ENCODE measurements at regions of chr2 and their contacts with region 1.

Region 1: GRCh38 chr2:26503231-26503880 is 25.4 kb upstream of the OTOF start:
- DNase-seq: peak; percentile 80
- H3K4me3 Mint-ChIP-seq: peak overlapping the region; percentile 84
- H3K27ac Mint-ChIP-seq: peak overlapping the region; percentile 9
- H3K4me1 Mint-ChIP-seq: no peaks in the 10 kb centered on the region
- H3K27me3 Mint-ChIP-seq: peaks cover 5% of the 10 kb centered on the region

Region 2: GRCh38 chr2:26033818-26034636 is 469.3 kb before region 1 on chr2 and contains the start of gene RAB10:
- intact Hi-C with region 1: no loop called
- DNase-seq: peak; percentile 100
- H3K4me3 Mint-ChIP-seq: peak within 1 kb of the TSS; percentile 93
- H3K27ac Mint-ChIP-seq: peak within 1 kb of the TSS; percentile 88
- H3K4me1 Mint-ChIP-seq: peaks cover 19% of the 10 kb centered on the region
- H3K27me3 Mint-ChIP-seq: peaks cover 2% of the 10 kb centered on the region
- total RNA-seq, gene RAB10: 134 and 140 TPM in 2 replicates

Region 3: DNA sequence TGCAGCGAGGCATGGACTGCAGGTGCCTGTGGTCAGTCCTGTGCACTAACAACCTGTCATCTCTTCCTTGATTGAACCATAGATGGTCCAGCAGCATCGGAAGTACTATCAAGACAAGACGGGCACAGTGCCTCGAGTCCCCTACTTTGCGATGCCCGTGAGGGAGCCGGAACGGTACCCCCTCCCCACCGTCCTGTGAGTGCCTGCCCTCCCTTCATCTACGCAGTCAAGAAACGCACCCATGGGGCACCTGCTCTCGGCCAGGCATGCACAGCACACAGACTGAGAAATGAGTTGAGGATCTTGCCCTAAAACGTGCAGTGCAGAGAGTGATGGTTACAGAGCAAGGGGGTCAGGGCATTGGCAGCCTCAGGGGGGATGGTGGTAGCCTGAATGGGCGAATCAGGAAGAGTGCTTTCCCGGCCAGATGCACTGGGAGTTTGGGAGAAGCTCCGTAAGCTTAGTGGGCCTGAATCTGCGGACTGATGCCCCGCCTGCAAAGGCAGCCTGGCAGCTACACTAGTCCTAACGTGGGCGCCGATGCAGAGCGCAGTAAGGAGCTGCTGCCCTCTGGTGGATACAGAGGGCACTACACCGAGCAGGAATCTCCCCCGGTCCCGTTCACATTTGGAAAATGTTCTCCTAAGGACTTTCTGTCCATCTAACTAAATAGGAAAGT is 74.2 kb after region 1 on chr2:
- intact Hi-C with region 1: loop called (anchors 5 kb)
- DNase-seq: peak; percentile 42
- H3K4me3 Mint-ChIP-seq: no peak overlapping the region
- H3K27ac Mint-ChIP-seq: no peak overlapping the region
- H3K4me1 Mint-ChIP-seq: no peaks in the 10 kb centered on the region
- H3K27me3 Mint-ChIP-seq: peaks cover 20% of the 10 kb centered on the region

Region 4: GRCh38 chr2:26666671-26667070 is 163.3 kb after region 1 on chr2:
- intact Hi-C with region 1: no loop called
- DNase-seq: no peak
- H3K4me3 Mint-ChIP-seq: no peak overlapping the region
- H3K27ac Mint-ChIP-seq: no peak overlapping the region
- H3K4me1 Mint-ChIP-seq: no peaks in the 10 kb centered on the region
- H3K27me3 Mint-ChIP-seq: peaks cover 19% of the 10 kb centered on the region

Measured in activated T-helper 2 cell treated with anti-CD3 and anti-CD28 coated beads, Interferon-gamma antibody, Interleukin-2, Interleukin-4, amounts not matched to agents 10 μg/mL and 5 μg/mL and 100 μg/mL, durations not matched to agents 14 hours and 24 hours and 36 hours (primary cell).